ENCODE measurements at regions of chr15 and their contacts with region 1.

Region 1: GRCh38 chr15:94670438-94671034 is 439.2 kb downstream of the MCTP2 start:
- DNase-seq: peak; percentile 30 to 66 (median 44)
- ATAC-seq: peak; percentile 78
- H3K4me3 ChIP-seq: no peak overlapping the region
- H3K27ac ChIP-seq: no peak overlapping the region
- H3K4me1 ChIP-seq: no peaks in the 10 kb centered on the region; a peak in 1 of 5 replicates
- H3K27me3 ChIP-seq: peaks cover 4 to 28% of the 10 kb centered on the region in 2 experiments; a peak in 4 of 5 replicates
- CTCF ChIP-seq: peak; percentile 35 to 80 (median 54); a peak in 4 of 6 replicates
- EP300 ChIP-seq: no peak
- POLR2A ChIP-seq: no peak
- RAD21 ChIP-seq: peak; percentile 84 to 91

Region 2: DNA sequence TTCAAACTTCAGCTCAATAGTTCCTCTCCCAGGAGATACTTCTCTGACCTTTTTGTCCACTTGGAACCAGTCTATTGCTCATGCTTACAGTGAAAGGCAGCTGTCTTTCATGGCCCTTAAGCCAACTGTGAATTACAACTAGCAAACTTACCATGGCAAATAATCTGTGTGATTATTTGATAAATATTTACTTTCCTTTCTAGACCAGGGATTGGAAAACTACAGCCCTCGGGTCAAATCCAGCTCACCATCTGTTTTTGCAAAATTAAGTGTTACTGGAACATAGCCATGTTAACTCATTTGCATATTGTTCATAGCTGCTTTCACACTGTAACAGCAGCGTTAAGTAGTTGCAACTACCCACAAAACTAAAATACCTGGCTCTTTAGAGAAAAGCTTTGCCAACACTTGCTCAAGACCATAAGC is 728.3 kb before region 1 on chr15:
- CTCF ChIA-PET with region 1: no interaction called
- POLR2A ChIA-PET with region 1: no interaction called
- in situ Hi-C with region 1: no loop called
- intact Hi-C with region 1: no loop called
- DNase-seq: no peak
- ATAC-seq: no peak
- H3K4me3 ChIP-seq: no peak overlapping the region
- H3K27ac ChIP-seq: no peak overlapping the region
- H3K4me1 ChIP-seq: no peaks in the 10 kb centered on the region
- H3K27me3 ChIP-seq: no peaks in the 10 kb centered on the region
- CTCF ChIP-seq: no peak
- EP300 ChIP-seq: no peak
- POLR2A ChIP-seq: no peak
- RAD21 ChIP-seq: no peak

Region 3: GRCh38 chr15:94722024-94722636 is 51.6 kb after region 1 on chr15:
- CTCF ChIA-PET with region 1: no interaction called
- POLR2A ChIA-PET with region 1: no interaction called
- in situ Hi-C with region 1: no loop called
- intact Hi-C with region 1: no loop called
- DNase-seq: no peak
- ATAC-seq: no peak
- H3K4me3 ChIP-seq: no peak overlapping the region
- H3K27ac ChIP-seq: no peak overlapping the region
- H3K4me1 ChIP-seq: no peaks in the 10 kb centered on the region
- H3K27me3 ChIP-seq: peaks cover 0 to 2% of the 10 kb centered on the region in 2 experiments; a peak in 1 of 5 replicates
- CTCF ChIP-seq: no peak
- EP300 ChIP-seq: no peak
- POLR2A ChIP-seq: no peak
- RAD21 ChIP-seq: no peak

Region 4: GRCh38 chr15:94858011-94858740 is 187.6 kb after region 1 on chr15:
- CTCF ChIA-PET with region 1: no interaction called
- POLR2A ChIA-PET with region 1: no interaction called
- in situ Hi-C with region 1: no loop called
- intact Hi-C with region 1: loop called (anchors 5 kb)
- DNase-seq: peak in 2 of 4 experiments; percentile 10 to 27
- ATAC-seq: peak; percentile 15
- H3K4me3 ChIP-seq: peak overlapping the region; percentile 72
- H3K27ac ChIP-seq: peak overlapping the region; percentile 92
- H3K4me1 ChIP-seq: peaks cover 9 to 20% of the 10 kb centered on the region in 2 experiments; a peak in 4 of 5 replicates
- H3K27me3 ChIP-seq: no peaks in the 10 kb centered on the region
- CTCF ChIP-seq: no peak
- EP300 ChIP-seq: no peak
- POLR2A ChIP-seq: no peak
- RAD21 ChIP-seq: no peak

Region 5: GRCh38 chr15:95169541-95170459 is 499.3 kb after region 1 on chr15:
- CTCF ChIA-PET with region 1: no interaction called
- POLR2A ChIA-PET with region 1: no interaction called
- in situ Hi-C with region 1: no loop called
- intact Hi-C with region 1: loop called (anchors 5 kb)
- DNase-seq: peak in 2 of 4 experiments; percentile 29 to 60
- ATAC-seq: peak; percentile 74
- H3K4me3 ChIP-seq: peak overlapping the region; percentile 13; the same call in 1 of the 2 replicates
- H3K27ac ChIP-seq: peak overlapping the region; percentile 88
- H3K4me1 ChIP-seq: peaks cover 19 to 36% of the 10 kb centered on the region in 2 experiments
- H3K27me3 ChIP-seq: no peaks in the 10 kb centered on the region
- CTCF ChIP-seq: no peak
- EP300 ChIP-seq: no peak
- POLR2A ChIP-seq: no peak
- RAD21 ChIP-seq: no peak

Region 6: DNA sequence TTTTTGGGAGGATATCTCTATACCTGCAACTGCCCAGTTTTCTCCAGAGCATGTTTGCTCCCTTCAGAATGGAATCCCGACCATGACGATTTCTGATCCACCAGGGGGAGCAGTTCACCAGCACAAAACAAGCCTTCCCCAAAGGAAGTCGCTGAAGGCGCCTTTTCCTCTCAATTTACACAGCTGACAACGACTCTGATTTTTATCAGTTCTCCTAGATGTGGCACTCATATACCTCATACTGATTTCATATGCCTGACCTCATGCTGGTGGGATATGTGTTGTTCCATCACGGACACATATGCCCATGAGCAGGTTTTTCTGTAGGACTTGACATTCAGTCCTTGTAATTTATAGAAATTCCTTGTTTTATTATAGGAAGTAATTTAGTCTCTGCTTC is 589.0 kb after region 1 on chr15:
- CTCF ChIA-PET with region 1: no interaction called
- POLR2A ChIA-PET with region 1: no interaction called
- in situ Hi-C with region 1: no loop called
- intact Hi-C with region 1: loop called (anchors 5 kb)
- DNase-seq: peak; percentile 49 to 85 (median 58)
- ATAC-seq: peak; percentile 95
- H3K4me3 ChIP-seq: no peak overlapping the region
- H3K27ac ChIP-seq: no peak overlapping the region
- H3K4me1 ChIP-seq: peaks cover 0 to 4% of the 10 kb centered on the region in 2 experiments; a peak in 3 of 5 replicates
- H3K27me3 ChIP-seq: no peaks in the 10 kb centered on the region; a peak in 1 of 5 replicates
- CTCF ChIP-seq: peak; percentile 64 to 85 (median 79)
- EP300 ChIP-seq: 0 out of 2 replicates have a peak, but pooled peaks have one; percentile 2
- POLR2A ChIP-seq: no peak
- RAD21 ChIP-seq: peak; percentile 85 to 91

Region 7: DNA sequence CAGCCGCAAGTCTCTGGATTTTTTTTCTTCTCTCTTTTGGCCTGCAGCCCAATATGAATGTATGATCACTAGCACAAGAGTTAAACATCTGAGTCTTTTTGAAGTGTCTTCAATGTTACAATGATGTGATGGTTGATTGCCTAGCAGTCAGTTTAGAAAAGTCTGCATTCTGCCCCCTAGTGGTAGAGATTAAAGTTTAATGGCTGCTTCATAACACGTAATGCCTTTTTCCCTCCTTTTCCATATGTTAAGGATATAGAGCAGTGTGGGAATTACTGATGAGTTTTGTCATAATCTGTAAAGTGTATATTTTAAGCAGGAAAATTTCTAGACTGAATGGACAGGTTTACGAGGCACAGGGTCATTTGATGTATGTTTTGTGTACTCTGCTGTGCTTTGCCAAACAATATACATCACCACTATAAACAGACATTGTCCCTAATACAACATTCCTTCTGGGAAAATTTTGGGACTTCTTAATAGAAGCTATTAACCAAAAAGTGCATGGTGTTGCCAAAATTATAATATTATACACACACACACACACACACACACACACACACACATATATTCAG is 621.4 kb after region 1 on chr15:
- CTCF ChIA-PET with region 1: no interaction called
- POLR2A ChIA-PET with region 1: no interaction called
- in situ Hi-C with region 1: no loop called
- intact Hi-C with region 1: loop called (anchors 1 kb)
- DNase-seq: peak; percentile 40 to 64 (median 59)
- ATAC-seq: peak; percentile 86
- H3K4me3 ChIP-seq: no peak overlapping the region
- H3K27ac ChIP-seq: no peak overlapping the region
- H3K4me1 ChIP-seq: no peaks in the 10 kb centered on the region
- H3K27me3 ChIP-seq: peaks cover 7 to 32% of the 10 kb centered on the region in 2 experiments
- CTCF ChIP-seq: peak; percentile 50 to 70 (median 62); a peak in 5 of 6 replicates
- EP300 ChIP-seq: no peak
- POLR2A ChIP-seq: no peak
- RAD21 ChIP-seq: peak; percentile 40 to 70; a peak in 3 of 4 replicates